ENCODE measurements at regions of chr2 and their contacts with region 1.

Region 1: GRCh38 chr2:25376750-25377621 is 35.3 kb upstream of the DNMT3A start:
- DNase-seq: peak; percentile 26
- H3K4me3 ChIP-seq: peak overlapping the region; percentile 5; the same call in 1 of the 2 replicates
- H3K27me3 ChIP-seq: no peaks in the 10 kb centered on the region; the same call in none of the 2 replicates
- CTCF ChIP-seq: peak; percentile 67

Region 2: GRCh38 chr2:24898122-24899021 is 478.6 kb before region 1 on chr2:
- CTCF ChIA-PET with region 1: no interaction called
- POLR2A ChIA-PET with region 1: no interaction called
- DNase-seq: no peak
- H3K4me3 ChIP-seq: no peak overlapping the region
- H3K27me3 ChIP-seq: no peaks in the 10 kb centered on the region
- CTCF ChIP-seq: no peak

Region 3: GRCh38 chr2:25347205-25347815 is 29.7 kb before region 1 on chr2:
- CTCF ChIA-PET with region 1: interaction called, 16 read pairs
- POLR2A ChIA-PET with region 1: no interaction called
- DNase-seq: no peak
- H3K4me3 ChIP-seq: no peak overlapping the region
- H3K27me3 ChIP-seq: no peaks in the 10 kb centered on the region
- CTCF ChIP-seq: no peak

Region 4: GRCh38 chr2:25362049-25362433 is 14.9 kb before region 1 on chr2:
- CTCF ChIA-PET with region 1: interaction called, 41 read pairs
- POLR2A ChIA-PET with region 1: no interaction called
- DNase-seq: peak; percentile 46
- H3K4me3 ChIP-seq: peak overlapping the region; percentile 31
- H3K27me3 ChIP-seq: no peaks in the 10 kb centered on the region
- CTCF ChIP-seq: peak; percentile 98

Region 5: DNA sequence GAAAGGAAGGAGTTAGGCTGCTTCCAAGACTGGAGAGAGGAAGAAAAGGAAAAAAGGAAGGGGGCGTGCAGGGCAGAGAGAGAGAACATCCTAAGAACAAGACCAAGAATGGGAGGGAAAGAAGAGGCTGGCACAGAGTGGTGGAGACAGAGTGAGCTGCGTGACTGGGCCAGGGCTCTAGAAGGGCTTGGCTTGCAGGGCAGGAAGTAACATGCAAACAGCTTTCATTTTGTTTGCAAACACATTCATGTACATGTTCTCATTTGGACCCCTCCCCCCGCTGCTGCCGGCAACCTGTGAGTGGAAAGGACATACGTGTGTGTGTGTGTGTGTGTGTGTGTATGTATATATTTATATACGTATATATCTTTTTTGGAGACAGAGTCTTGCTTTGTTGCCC is 11.5 kb after region 1 on chr2:
- CTCF ChIA-PET with region 1: interaction called, 10 read pairs
- POLR2A ChIA-PET with region 1: no interaction called
- DNase-seq: no peak
- H3K4me3 ChIP-seq: no peak overlapping the region
- H3K27me3 ChIP-seq: no peaks in the 10 kb centered on the region
- CTCF ChIP-seq: no peak

Region 6: DNA sequence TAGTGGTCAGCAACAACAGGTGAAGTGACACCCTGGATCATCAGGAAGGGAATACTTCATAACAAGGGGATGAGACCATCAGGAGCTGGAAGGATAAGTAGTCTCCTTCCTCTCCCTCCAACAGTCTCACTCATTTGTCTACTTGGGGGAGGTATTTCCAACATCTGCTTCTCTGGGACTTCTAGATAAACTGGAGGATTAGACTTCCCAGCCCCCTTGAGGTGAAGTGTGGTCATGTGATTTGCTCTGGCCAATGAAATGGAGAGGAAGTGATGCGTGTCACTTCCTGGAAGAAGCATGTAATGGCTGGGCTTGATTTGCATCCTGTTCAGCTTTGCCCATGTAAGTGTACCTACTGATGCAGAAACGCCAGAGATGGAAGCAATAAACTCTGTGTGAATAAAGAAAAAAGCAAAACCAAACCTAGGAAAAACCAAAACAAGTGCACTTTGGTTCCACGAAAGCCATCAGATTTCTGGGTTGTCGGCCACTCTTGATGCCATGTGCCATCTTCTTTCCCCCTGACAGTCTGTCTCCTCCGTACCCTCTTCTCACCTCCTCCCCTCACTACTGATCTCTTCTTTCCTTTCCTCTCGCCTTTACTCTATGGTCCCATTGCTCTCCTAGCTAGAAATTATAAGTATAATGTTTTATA is 40.9 kb after region 1 on chr2:
- CTCF ChIA-PET with region 1: no interaction called
- POLR2A ChIA-PET with region 1: no interaction called
- DNase-seq: no peak
- H3K4me3 ChIP-seq: no peak overlapping the region
- H3K27me3 ChIP-seq: no peaks in the 10 kb centered on the region
- CTCF ChIP-seq: no peak